Heart left ventricle (tissue), 16 donors: ENCODE measurements at regions of chr5 and their contacts with region 1.

Region 1: DNA sequence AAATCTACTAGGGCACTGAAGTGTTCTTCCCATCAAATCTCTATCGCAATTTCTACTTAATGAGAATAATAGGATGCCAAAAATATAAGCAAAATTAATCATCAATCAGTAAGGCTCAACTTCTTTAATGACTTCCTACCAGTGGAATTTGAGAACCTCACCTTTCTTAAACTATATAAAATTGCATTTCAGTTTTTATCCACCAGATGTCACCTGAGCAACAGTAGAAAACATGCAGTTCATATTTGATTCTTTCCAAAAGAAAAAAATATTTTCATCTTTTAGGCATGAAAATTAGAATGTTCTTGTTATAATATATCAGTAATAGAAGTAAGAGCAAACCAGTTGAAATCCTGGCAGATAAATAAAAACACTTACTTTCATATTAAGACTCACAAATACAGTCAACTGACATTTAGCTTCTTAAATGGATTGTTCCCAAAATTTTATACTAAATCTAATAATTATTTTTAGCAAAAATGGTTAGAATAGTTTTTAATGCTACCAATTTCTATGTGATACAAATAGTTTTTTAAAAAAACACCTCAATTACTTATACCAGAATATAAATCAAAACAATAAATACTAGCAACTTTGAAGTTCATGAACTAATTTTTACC is 13.4 kb upstream of the CCDC112 start:
- DNase-seq: no peak
- ATAC-seq: peak in 2 of 4 donors; percentile 47 to 51
- H3K4me3 ChIP-seq: no peak overlapping the region
- H3K27ac ChIP-seq: no peak overlapping the region
- H3K4me1 ChIP-seq: no peaks in the 10 kb centered on the region
- H3K27me3 ChIP-seq: no peaks in the 10 kb centered on the region
- CTCF ChIP-seq: peak; percentile 67 to 89 (median 74)
- POLR2A ChIP-seq: no peak

Region 2: GRCh38 chr5:115372146-115372545 is 62.3 kb after region 1 on chr5:
- intact Hi-C with region 1: loop called (anchors 5 to 10 kb)
- DNase-seq: no peak
- ATAC-seq: no peak
- H3K4me3 ChIP-seq: no peak overlapping the region
- H3K27ac ChIP-seq: peak overlapping the region in 5 of 12 donors; percentile 21 to 62 (median 31)
- H3K4me1 ChIP-seq: peaks cover 0 to 19% (median 4%) of the 10 kb centered on the region in 12 donors
- H3K27me3 ChIP-seq: no peaks in the 10 kb centered on the region
- CTCF ChIP-seq: no peak
- POLR2A ChIP-seq: no peak

Region 3: DNA sequence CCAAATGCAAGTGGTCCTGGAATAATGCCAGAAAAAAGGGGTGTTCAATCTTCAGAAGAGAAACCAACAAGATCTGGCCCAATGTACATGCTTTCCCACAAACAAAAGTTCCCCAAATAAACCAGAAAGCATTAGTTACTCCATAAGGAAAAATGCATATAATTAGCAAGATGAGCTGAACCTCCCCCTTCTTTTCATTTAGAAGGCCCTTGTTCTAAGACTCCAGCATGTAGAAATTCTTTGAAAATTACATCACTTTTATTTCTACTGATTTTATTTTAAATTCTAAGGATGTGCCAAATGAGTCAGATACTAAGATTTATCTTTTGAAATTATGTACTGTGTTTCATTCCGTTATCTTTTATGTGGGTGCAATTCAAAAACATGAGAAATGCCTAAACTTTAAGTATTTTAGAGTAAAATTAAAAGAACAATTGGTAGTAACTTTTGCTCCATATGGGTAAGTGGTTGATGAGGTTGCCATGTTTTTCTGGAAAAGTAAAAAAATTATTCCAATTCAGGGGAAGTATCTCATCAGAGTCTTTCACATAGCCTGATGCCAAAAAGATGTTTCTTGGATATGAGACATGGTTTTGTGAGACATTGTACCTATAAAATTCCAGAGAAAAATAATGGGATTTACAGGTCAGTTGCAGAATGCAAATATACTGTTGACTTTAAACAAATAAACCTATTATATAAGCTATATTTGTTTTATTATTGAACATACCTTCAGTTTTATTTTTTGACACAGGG is 93.1 kb after region 1 on chr5:
- intact Hi-C with region 1: no loop called
- DNase-seq: no peak
- ATAC-seq: peak in 1 of 4 donors; percentile 52
- H3K4me3 ChIP-seq: no peak overlapping the region
- H3K27ac ChIP-seq: no peak overlapping the region
- H3K4me1 ChIP-seq: no peaks in the 10 kb centered on the region
- H3K27me3 ChIP-seq: no peaks in the 10 kb centered on the region
- CTCF ChIP-seq: no peak
- POLR2A ChIP-seq: no peak

Region 4: GRCh38 chr5:115586601-115587048 is 276.8 kb after region 1 on chr5:
- intact Hi-C with region 1: loop called (anchors 1 to 5 kb)
- DNase-seq: no peak
- ATAC-seq: no peak
- H3K4me3 ChIP-seq: no peak overlapping the region
- H3K27ac ChIP-seq: no peak overlapping the region
- H3K4me1 ChIP-seq: peaks cover 0 to 28% (median 5%) of the 10 kb centered on the region in 12 donors
- H3K27me3 ChIP-seq: no peaks in the 10 kb centered on the region
- CTCF ChIP-seq: peak; percentile 44 to 76 (median 62)
- POLR2A ChIP-seq: no peak

Region 5: DNA sequence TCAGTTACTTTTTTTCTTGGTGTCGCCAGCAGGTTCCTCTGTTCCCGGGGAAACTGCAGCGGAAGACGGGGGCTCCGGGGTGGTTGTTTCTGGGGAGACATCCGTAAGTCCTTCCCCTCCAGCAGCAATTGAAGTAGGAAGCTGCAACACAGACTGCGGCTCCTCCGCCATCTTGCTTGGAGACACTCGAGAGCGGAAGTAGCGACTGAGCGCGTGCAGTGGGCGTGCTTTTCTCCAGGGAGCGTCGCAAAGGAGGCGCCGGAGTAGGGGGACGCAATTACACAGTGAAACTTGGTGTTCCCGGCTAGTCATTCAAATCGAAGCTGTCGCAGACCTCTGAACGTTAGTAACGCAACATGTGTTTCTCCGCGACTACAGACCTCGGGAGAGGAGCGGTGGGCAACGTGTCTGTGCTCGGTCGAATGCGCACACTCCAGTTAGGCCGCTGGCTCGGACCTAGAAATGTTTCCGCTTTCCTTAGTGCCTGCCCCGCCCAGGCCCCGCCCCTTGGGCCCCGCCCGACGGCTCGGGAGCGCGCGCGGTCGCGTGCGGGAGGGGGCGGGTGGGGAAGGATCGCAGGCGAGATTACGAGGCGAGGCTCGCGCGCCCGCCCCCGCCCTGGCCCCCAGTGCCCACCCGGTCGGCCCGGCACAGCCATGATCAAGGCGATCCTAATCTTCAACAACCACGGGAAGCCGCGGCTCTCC is 531.7 kb after region 1 on chr5 and contains the starts of genes AP3S1 and ATG12:
- intact Hi-C with region 1: loop called in 6 of 10 experiments (anchors 5 to 10 kb)
- DNase-seq: peak; percentile 92 to 95 (median 93)
- ATAC-seq: peak; percentile 91 to 97 (median 96)
- H3K4me3 ChIP-seq: peak within 1 kb of the TSS; percentile 73 to 97 (median 86)
- H3K27ac ChIP-seq: peak within 1 kb of the TSS; percentile 88 to 98 (median 96)
- H3K4me1 ChIP-seq: peaks cover 0 to 74% (median 60%) of the 10 kb centered on the region in 12 donors
- H3K27me3 ChIP-seq: no peaks in the 10 kb centered on the region
- CTCF ChIP-seq: no peak
- POLR2A ChIP-seq: peak in 1 of 2 donors; percentile 42
- total RNA-seq, gene AP3S1: 20.3 to 56.4 (median 46.6) TPM
- total RNA-seq, gene ATG12: 15.3 to 29.2 (median 20.8) TPM